ENCODE measurements at regions of chr16 and their contacts with region 1.

Region 1: DNA sequence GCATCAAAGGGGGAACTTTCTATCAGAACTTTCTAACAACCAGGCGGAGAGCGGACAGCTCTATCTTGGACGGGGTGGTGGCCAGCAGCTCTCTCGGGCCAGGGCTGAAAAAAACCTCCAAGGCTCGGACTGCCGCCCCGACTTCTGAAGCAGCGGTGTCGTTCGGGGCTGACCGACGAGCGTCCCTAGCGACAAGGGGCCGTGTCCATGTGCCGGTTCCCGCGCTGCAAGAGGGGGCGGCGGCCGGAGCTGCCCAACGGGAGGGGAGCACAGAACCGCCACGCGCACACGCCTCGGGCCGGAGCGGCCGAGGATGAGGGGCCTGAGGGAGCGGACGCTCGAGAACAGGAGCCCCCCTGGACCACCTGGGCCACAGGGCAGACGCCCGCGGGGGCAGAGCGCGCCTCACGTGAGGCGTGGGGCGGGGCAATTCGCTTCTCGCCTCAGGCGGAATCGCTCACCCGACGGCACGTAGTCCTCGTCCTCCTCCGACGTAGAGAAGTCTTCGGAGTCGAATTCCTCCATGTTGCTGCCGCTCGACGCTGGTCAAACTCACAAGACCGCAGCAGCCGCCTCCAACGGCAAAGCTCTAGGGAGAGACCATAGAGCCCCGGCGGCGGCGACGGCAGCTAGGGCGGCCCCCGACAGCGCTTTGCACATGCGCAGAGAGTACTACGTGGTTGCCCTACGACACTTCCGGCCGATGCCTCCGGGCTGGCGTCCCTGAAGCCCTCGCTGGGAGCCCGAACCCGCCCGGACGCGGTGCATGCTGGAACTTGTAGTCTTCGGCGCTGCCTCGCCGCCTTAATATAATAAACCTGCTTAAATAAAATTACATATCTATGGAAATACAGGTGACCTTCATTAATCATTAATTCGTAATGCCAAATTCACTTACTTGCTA is at the start of gene CFDP1:
- DNase-seq: peak; percentile 98
- ATAC-seq: peak; percentile 86
- H3K4me3 ChIP-seq: peak within 1 kb of the TSS; percentile 94 to 100 (median 95)
- H3K4me3 Mint-ChIP-seq: peak within 1 kb of the TSS; percentile 88
- H3K27ac ChIP-seq: peak within 1 kb of the TSS; percentile 91 to 99
- H3K27ac Mint-ChIP-seq: peak within 1 kb of the TSS; percentile 95
- H3K4me1 ChIP-seq: peaks cover 7 to 15% of the 10 kb centered on the region in 2 donors
- H3K4me1 Mint-ChIP-seq: peaks cover 20% of the 10 kb centered on the region
- H3K27me3 ChIP-seq: no peaks in the 10 kb centered on the region
- H3K27me3 Mint-ChIP-seq: no peaks in the 10 kb centered on the region
- CTCF ChIP-seq: no peak
- total RNA-seq, gene CFDP1: 39.5 and 42.8 TPM in 2 replicates

Region 2: DNA sequence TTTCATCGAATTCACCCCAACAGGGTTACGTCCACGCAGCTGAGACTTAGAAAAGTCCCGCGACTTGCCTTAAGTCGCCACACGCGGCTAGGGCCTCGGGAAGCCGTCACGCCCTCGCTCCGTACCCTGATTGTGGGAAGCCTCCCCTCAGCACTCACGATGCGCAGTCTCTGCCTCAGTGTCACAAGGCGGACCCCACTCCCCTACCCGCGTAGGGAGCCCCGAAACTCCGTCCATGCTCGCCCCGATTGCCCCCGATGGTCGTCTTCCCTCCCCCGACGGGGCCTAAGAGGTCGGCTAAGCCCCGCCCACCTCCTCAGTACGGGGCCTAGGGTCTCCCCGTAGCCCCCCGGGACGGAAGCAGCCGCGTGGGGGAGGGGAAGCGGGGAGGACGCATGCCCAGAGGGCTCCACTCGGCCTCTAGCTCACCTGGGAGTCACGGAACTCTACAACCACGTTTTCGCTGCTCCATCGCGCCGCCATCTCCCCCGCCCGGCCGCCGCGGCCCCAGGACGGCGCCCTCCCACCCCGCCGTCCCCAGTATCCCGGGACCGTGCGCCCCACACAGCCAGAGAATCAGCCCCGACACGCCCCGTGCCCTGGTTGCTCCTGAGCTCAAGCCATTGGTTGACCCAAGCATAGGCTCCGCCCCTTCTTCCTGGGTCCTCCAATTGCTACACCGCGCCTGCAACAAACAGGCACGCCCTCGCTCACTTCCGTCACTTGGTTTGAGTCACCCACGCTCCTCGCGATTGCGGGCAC is 448.4 kb before region 1 on chr16 and contains the start of gene WDR59:
- CTCF ChIA-PET with region 1: no interaction called
- POLR2A ChIA-PET with region 1: no interaction called
- intact Hi-C with region 1: loop called (anchors 1 kb)
- DNase-seq: peak; percentile 98
- ATAC-seq: peak; percentile 99
- H3K4me3 ChIP-seq: peak within 1 kb of the TSS; percentile 56 to 98 (median 83)
- H3K4me3 Mint-ChIP-seq: peak within 1 kb of the TSS; percentile 96
- H3K27ac ChIP-seq: peak within 1 kb of the TSS; percentile 47 to 72
- H3K27ac Mint-ChIP-seq: peak within 1 kb of the TSS; percentile 92
- H3K4me1 ChIP-seq: peaks cover 0 to 15% of the 10 kb centered on the region in 2 donors
- H3K4me1 Mint-ChIP-seq: peaks cover 12% of the 10 kb centered on the region
- H3K27me3 ChIP-seq: no peaks in the 10 kb centered on the region
- H3K27me3 Mint-ChIP-seq: no peaks in the 10 kb centered on the region
- CTCF ChIP-seq: no peak
- total RNA-seq, gene WDR59: 127 and 136 TPM in 2 replicates

Region 3: GRCh38 chr16:75198135-75198600 is 234.9 kb before region 1 on chr16:
- CTCF ChIA-PET with region 1: interaction called, 5 read pairs
- POLR2A ChIA-PET with region 1: no interaction called
- intact Hi-C with region 1: loop called (anchors 1 kb)
- DNase-seq: no peak
- ATAC-seq: no peak
- H3K4me3 ChIP-seq: no peak overlapping the region
- H3K4me3 Mint-ChIP-seq: no peak overlapping the region
- H3K27ac ChIP-seq: no peak overlapping the region
- H3K27ac Mint-ChIP-seq: no peak overlapping the region
- H3K4me1 ChIP-seq: peaks cover 11 to 12% of the 10 kb centered on the region in 2 donors
- H3K4me1 Mint-ChIP-seq: peaks cover 10% of the 10 kb centered on the region
- H3K27me3 ChIP-seq: peaks cover 0 to 54% (median 12%) of the 10 kb centered on the region in 4 experiments
- H3K27me3 Mint-ChIP-seq: peaks cover 37% of the 10 kb centered on the region
- CTCF ChIP-seq: no peak

Region 4: DNA sequence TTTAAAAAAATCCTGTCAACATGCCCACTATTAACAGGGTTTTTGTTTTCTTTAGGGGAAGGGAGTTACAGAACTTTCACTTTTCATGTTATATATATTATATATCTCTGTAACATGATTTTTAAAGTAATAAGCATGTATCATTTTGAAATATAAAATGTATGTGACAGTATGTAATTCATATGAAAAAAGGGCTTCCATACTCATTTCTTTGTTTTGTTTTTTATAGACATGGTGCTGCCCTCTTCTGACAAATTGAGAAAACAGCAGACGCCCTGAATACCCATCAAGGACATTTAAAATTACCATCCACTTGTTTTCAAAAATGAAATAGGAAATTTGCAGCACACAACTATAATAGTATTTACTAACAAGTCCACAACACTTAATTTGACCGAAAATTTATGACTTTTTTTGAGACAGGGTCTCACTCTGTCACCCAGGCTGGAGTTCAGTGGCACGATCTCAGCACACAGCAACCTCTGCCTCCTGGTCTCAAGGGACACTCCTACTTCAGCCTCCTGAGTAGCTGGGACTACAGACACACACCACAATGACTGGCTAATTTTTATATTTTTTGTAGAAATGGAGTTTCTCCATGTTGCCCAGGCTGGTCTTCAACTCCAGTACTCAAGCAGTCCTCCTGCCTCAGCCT is 30.1 kb before region 1 on chr16:
- CTCF ChIA-PET with region 1: no interaction called
- POLR2A ChIA-PET with region 1: no interaction called
- intact Hi-C with region 1: no loop called
- DNase-seq: peak; percentile 50
- ATAC-seq: no peak
- H3K4me3 ChIP-seq: no peak overlapping the region
- H3K4me3 Mint-ChIP-seq: no peak overlapping the region
- H3K27ac ChIP-seq: no peak overlapping the region
- H3K27ac Mint-ChIP-seq: no peak overlapping the region
- H3K4me1 ChIP-seq: no peaks in the 10 kb centered on the region
- H3K4me1 Mint-ChIP-seq: no peaks in the 10 kb centered on the region
- H3K27me3 ChIP-seq: no peaks in the 10 kb centered on the region
- H3K27me3 Mint-ChIP-seq: no peaks in the 10 kb centered on the region
- CTCF ChIP-seq: peak; percentile 81

Region 5: GRCh38 chr16:75464130-75464918 is 31.2 kb after region 1 on chr16 and contains the start of gene TMEM170A:
- CTCF ChIA-PET with region 1: interaction called, 41 read pairs
- POLR2A ChIA-PET with region 1: interaction called, 13 read pairs
- intact Hi-C with region 1: loop called (anchors 1 kb)
- DNase-seq: peak; percentile 99
- ATAC-seq: peak; percentile 92
- H3K4me3 ChIP-seq: peak within 1 kb of the TSS; percentile 26 to 79 (median 72)
- H3K4me3 Mint-ChIP-seq: peak within 1 kb of the TSS; percentile 96
- H3K27ac ChIP-seq: peak within 1 kb of the TSS; percentile 92 to 93
- H3K27ac Mint-ChIP-seq: peak within 1 kb of the TSS; percentile 93
- H3K4me1 ChIP-seq: peaks cover 15 to 26% of the 10 kb centered on the region in 2 donors
- H3K4me1 Mint-ChIP-seq: peaks cover 37% of the 10 kb centered on the region
- H3K27me3 ChIP-seq: no peaks in the 10 kb centered on the region
- H3K27me3 Mint-ChIP-seq: no peaks in the 10 kb centered on the region
- CTCF ChIP-seq: peak; percentile 100
- total RNA-seq, gene TMEM170A: 37.9 and 45.6 TPM in 2 replicates

Region 6: GRCh38 chr16:75495076-75495674 is 62.1 kb after region 1 on chr16 and contains the start of gene CHST6:
- CTCF ChIA-PET with region 1: no interaction called
- POLR2A ChIA-PET with region 1: no interaction called
- intact Hi-C with region 1: no loop called
- DNase-seq: peak; percentile 42
- ATAC-seq: peak; percentile 78
- H3K4me3 ChIP-seq: peak within 1 kb of the TSS in 4 of 5 experiments; percentile 13 to 46 (median 41)
- H3K4me3 Mint-ChIP-seq: peak within 1 kb of the TSS; percentile 78
- H3K27ac ChIP-seq: no peak within 1 kb of the TSS
- H3K27ac Mint-ChIP-seq: no peak within 1 kb of the TSS
- H3K4me1 ChIP-seq: peaks cover 7 to 11% of the 10 kb centered on the region in 2 donors
- H3K4me1 Mint-ChIP-seq: peaks cover 10% of the 10 kb centered on the region
- H3K27me3 ChIP-seq: peaks cover 0 to 16% (median 6%) of the 10 kb centered on the region in 4 experiments
- H3K27me3 Mint-ChIP-seq: peaks cover 28% of the 10 kb centered on the region
- CTCF ChIP-seq: no peak
- total RNA-seq, gene CHST6: 0.07 and 0.17 TPM in 2 replicates

Region 7: DNA sequence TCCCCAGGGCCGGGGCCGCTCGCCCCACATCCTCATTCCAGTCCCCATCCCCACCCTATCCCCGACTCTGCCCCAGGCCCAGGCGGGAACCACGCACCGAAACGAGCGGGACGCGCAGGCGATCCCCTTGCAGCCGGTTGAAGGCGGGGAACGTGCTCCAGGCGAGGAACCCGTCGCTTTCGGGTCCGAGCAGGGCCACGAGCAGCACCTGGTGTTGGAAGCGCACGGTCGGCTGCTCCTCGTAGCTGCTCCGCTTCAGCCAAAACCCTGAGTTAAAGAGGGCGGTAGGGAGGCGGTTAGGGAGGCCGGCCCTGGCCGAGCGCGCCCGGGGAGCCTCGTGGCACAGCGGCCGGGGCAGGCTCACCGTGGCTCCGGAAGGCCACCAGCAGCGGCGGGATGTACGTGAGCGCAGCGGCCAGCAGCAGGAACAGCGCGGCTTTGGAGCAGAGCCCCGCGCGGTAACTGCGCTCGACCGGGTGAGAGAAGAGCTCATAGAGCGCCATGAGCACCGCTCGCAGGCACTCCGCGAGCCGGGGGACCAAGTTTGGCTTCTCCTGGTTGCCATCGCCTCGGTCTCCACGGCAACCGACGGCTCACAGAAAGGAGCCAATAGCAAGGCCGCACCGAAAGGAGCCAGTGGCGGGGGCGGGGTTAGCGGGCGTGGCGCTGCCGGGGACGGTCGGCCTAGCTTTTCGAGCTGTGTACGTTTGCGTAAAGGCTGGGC is 122.8 kb after region 1 on chr16 and contains the start of gene TMEM231:
- CTCF ChIA-PET with region 1: no interaction called
- POLR2A ChIA-PET with region 1: no interaction called
- intact Hi-C with region 1: loop called (anchors 1 kb)
- DNase-seq: peak; percentile 96
- ATAC-seq: peak; percentile 93
- H3K4me3 ChIP-seq: peak within 1 kb of the TSS; percentile 34 to 78 (median 71)
- H3K4me3 Mint-ChIP-seq: peak within 1 kb of the TSS; percentile 97
- H3K27ac ChIP-seq: peak within 1 kb of the TSS; percentile 9 to 76
- H3K27ac Mint-ChIP-seq: peak within 1 kb of the TSS; percentile 88
- H3K4me1 ChIP-seq: peaks cover 9 to 16% of the 10 kb centered on the region in 2 donors
- H3K4me1 Mint-ChIP-seq: peaks cover 10% of the 10 kb centered on the region
- H3K27me3 ChIP-seq: peaks cover 0 to 8% (median 0%) of the 10 kb centered on the region in 4 experiments
- H3K27me3 Mint-ChIP-seq: no peaks in the 10 kb centered on the region
- CTCF ChIP-seq: peak; percentile 17
- total RNA-seq, gene TMEM231: 4.7 and 6.0 TPM in 2 replicates

Region 8: GRCh38 chr16:75622761-75623605 is 189.9 kb after region 1 on chr16 and contains the start of gene ADAT1:
- CTCF ChIA-PET with region 1: interaction called, 3 read pairs
- POLR2A ChIA-PET with region 1: interaction called, 3 read pairs
- intact Hi-C with region 1: loop called (anchors 1 kb)
- DNase-seq: peak; percentile 98
- ATAC-seq: peak; percentile 94
- H3K4me3 ChIP-seq: peak within 1 kb of the TSS; percentile 68 to 85 (median 80)
- H3K4me3 Mint-ChIP-seq: peak within 1 kb of the TSS; percentile 96
- H3K27ac ChIP-seq: peak within 1 kb of the TSS; percentile 87 to 91
- H3K27ac Mint-ChIP-seq: peak within 1 kb of the TSS; percentile 98
- H3K4me1 ChIP-seq: peaks cover 12 to 27% of the 10 kb centered on the region in 2 donors
- H3K4me1 Mint-ChIP-seq: peaks cover 27% of the 10 kb centered on the region
- H3K27me3 ChIP-seq: no peaks in the 10 kb centered on the region
- H3K27me3 Mint-ChIP-seq: no peaks in the 10 kb centered on the region
- CTCF ChIP-seq: no peak
- total RNA-seq, gene ADAT1: 71.2 and 75.2 TPM in 2 replicates